ENCODE measurements at regions of chrX and their contacts with region 1.

Region 1: GRCh38 chrX:71128915-71129765 is 10.7 kb downstream of the MED12 start:
- DNase-seq: peak; percentile 60
- H3K4me3 Mint-ChIP-seq: no peak overlapping the region
- H3K27ac Mint-ChIP-seq: no peak overlapping the region
- H3K4me1 Mint-ChIP-seq: peaks cover 8% of the 10 kb centered on the region
- H3K27me3 Mint-ChIP-seq: peaks cover 68% of the 10 kb centered on the region
- CTCF ChIP-seq: peak; percentile 72

Region 2: DNA sequence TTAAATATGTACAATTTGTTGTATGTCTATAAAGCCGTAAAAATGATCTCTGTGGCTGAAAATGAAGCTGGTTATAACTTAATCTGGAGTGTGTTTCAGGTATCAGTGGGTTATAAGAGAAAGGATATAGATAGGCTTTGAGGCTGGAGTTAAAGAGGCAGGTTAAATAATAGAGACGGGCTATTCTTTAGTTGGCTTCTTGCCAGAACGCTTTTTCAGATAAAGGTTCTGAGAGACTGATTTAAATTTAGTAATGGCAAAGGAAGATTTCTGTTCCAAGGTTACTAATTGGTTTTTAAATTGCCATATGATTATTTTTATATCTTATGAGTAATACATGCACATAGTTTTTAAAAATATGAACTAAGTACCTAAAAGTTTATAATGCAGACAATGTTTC is 1196.8 kb before region 1 on chrX:
- CTCF ChIA-PET with region 1: no interaction called
- POLR2A ChIA-PET with region 1: no interaction called
- intact Hi-C with region 1: no loop called
- DNase-seq: no peak
- H3K4me3 Mint-ChIP-seq: no peak overlapping the region
- H3K27ac Mint-ChIP-seq: no peak overlapping the region
- H3K4me1 Mint-ChIP-seq: no peaks in the 10 kb centered on the region
- H3K27me3 Mint-ChIP-seq: peaks cover 38% of the 10 kb centered on the region
- CTCF ChIP-seq: no peak

Region 3: GRCh38 chrX:70042399-70043371 is 1086.5 kb before region 1 on chrX:
- CTCF ChIA-PET with region 1: no interaction called
- POLR2A ChIA-PET with region 1: no interaction called
- intact Hi-C with region 1: no loop called
- DNase-seq: no peak
- H3K4me3 Mint-ChIP-seq: no peak overlapping the region
- H3K27ac Mint-ChIP-seq: no peak overlapping the region
- H3K4me1 Mint-ChIP-seq: peaks cover 18% of the 10 kb centered on the region
- H3K27me3 Mint-ChIP-seq: peaks cover 44% of the 10 kb centered on the region
- CTCF ChIP-seq: no peak

Region 4: GRCh38 chrX:70970482-70970995 is 158.6 kb before region 1 on chrX:
- CTCF ChIA-PET with region 1: interaction called, 10 read pairs
- POLR2A ChIA-PET with region 1: no interaction called
- intact Hi-C with region 1: no loop called
- DNase-seq: peak; percentile 26
- H3K4me3 Mint-ChIP-seq: no peak overlapping the region
- H3K27ac Mint-ChIP-seq: no peak overlapping the region
- H3K4me1 Mint-ChIP-seq: no peaks in the 10 kb centered on the region
- H3K27me3 Mint-ChIP-seq: peaks cover 18% of the 10 kb centered on the region
- CTCF ChIP-seq: peak; percentile 36

Region 5: GRCh38 chrX:70998411-70999027 is 130.6 kb before region 1 on chrX:
- CTCF ChIA-PET with region 1: interaction called, 14 read pairs
- POLR2A ChIA-PET with region 1: no interaction called
- intact Hi-C with region 1: loop called (anchors 1 kb)
- DNase-seq: peak; percentile 81
- H3K4me3 Mint-ChIP-seq: no peak overlapping the region
- H3K27ac Mint-ChIP-seq: peak overlapping the region; percentile 11
- H3K4me1 Mint-ChIP-seq: peaks cover 8% of the 10 kb centered on the region
- H3K27me3 Mint-ChIP-seq: peaks cover 18% of the 10 kb centered on the region
- CTCF ChIP-seq: no peak

Region 6: GRCh38 chrX:71068049-71068763 is 60.9 kb before region 1 on chrX and contains the start of gene SNX12:
- CTCF ChIA-PET with region 1: interaction called, 5 read pairs
- POLR2A ChIA-PET with region 1: interaction called, 3 read pairs
- intact Hi-C with region 1: loop called (anchors 1 kb)
- DNase-seq: peak; percentile 89
- H3K4me3 Mint-ChIP-seq: peak within 1 kb of the TSS; percentile 99
- H3K27ac Mint-ChIP-seq: peak within 1 kb of the TSS; percentile 93
- H3K4me1 Mint-ChIP-seq: peaks cover 17% of the 10 kb centered on the region
- H3K27me3 Mint-ChIP-seq: peaks cover 33% of the 10 kb centered on the region
- CTCF ChIP-seq: no peak
- total RNA-seq, gene SNX12: 67.0 and 81.3 TPM in 2 replicates

Region 7: GRCh38 chrX:71254092-71254941 is 125.2 kb after region 1 on chrX and contains the start of gene ZMYM3:
- CTCF ChIA-PET with region 1: no interaction called
- POLR2A ChIA-PET with region 1: no interaction called
- intact Hi-C with region 1: no loop called
- DNase-seq: peak; percentile 83
- H3K4me3 Mint-ChIP-seq: peak within 1 kb of the TSS; percentile 92
- H3K27ac Mint-ChIP-seq: peak within 1 kb of the TSS; percentile 82
- H3K4me1 Mint-ChIP-seq: peaks cover 8% of the 10 kb centered on the region
- H3K27me3 Mint-ChIP-seq: peaks cover 10% of the 10 kb centered on the region
- CTCF ChIP-seq: no peak
- total RNA-seq, gene ZMYM3: 7.9 and 8.4 TPM in 2 replicates

Measured in MCF 10A (cell line).